ENCODE measurements at regions of chr2 and their contacts with region 1.

Region 1: GRCh38 chr2:172442072-172442895 is 14.9 kb downstream of the ITGA6 start:
- DNase-seq: peak in 7 of 9 experiments; percentile 27 to 66 (median 55)
- ATAC-seq: peak; percentile 45
- H3K4me3 ChIP-seq: peak overlapping the region in 1 of 2 experiments; percentile 50
- H3K4me3 Mint-ChIP-seq: peak overlapping the region; percentile 81
- H3K27ac ChIP-seq: no peak overlapping the region
- H3K27ac Mint-ChIP-seq: peak overlapping the region; percentile 88
- H3K4me1 ChIP-seq: peaks cover 82% of the 10 kb centered on the region
- H3K4me1 Mint-ChIP-seq: peaks cover 53% of the 10 kb centered on the region
- H3K27me3 ChIP-seq: no peaks in the 10 kb centered on the region
- H3K27me3 Mint-ChIP-seq: no peaks in the 10 kb centered on the region
- CTCF ChIP-seq: no peak

Region 2: GRCh38 chr2:172416447-172417058 is 25.7 kb before region 1 on chr2:
- CTCF ChIA-PET with region 1: no interaction called
- POLR2A ChIA-PET with region 1: no interaction called
- intact Hi-C with region 1: no loop called
- DNase-seq: no peak
- ATAC-seq: no peak
- H3K4me3 ChIP-seq: no peak overlapping the region
- H3K4me3 Mint-ChIP-seq: no peak overlapping the region
- H3K27ac ChIP-seq: no peak overlapping the region
- H3K27ac Mint-ChIP-seq: no peak overlapping the region
- H3K4me1 ChIP-seq: no peaks in the 10 kb centered on the region
- H3K4me1 Mint-ChIP-seq: no peaks in the 10 kb centered on the region
- H3K27me3 ChIP-seq: no peaks in the 10 kb centered on the region
- H3K27me3 Mint-ChIP-seq: peaks cover 5% of the 10 kb centered on the region
- CTCF ChIP-seq: no peak

Region 3: DNA sequence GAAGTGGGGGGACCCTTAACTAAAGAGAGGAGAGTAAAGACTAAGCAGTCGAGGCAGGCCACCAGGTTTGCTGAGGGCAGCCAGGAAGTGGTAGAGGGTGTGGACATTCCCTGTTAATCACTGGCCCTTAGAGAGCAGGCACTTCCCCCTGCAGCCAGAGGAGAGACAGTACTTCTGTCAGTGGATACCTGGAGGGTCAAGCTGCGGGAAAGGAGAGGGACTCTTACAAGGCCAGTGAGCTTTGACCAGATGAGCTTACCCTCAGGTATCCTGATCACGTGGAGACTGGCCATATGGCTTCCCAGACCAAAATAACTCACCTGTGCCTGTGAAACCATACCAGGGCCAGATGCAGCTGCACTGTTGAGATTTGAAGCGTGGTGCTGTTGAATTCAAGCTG is 13.7 kb after region 1 on chr2:
- CTCF ChIA-PET with region 1: interaction called, 657 read pairs
- POLR2A ChIA-PET with region 1: interaction called, 66 read pairs
- intact Hi-C with region 1: no loop called
- DNase-seq: no peak
- ATAC-seq: no peak
- H3K4me3 ChIP-seq: no peak overlapping the region
- H3K4me3 Mint-ChIP-seq: no peak overlapping the region
- H3K27ac ChIP-seq: no peak overlapping the region
- H3K27ac Mint-ChIP-seq: peak overlapping the region; percentile 86
- H3K4me1 ChIP-seq: peaks cover 85% of the 10 kb centered on the region
- H3K4me1 Mint-ChIP-seq: peaks cover 90% of the 10 kb centered on the region
- H3K27me3 ChIP-seq: no peaks in the 10 kb centered on the region
- H3K27me3 Mint-ChIP-seq: no peaks in the 10 kb centered on the region
- CTCF ChIP-seq: no peak

Measured in CD8-positive, alpha-beta T cell (primary cell).